CD4-positive, alpha-beta memory T cell (primary cell): ENCODE measurements at regions of chr13 and their contacts with region 1.

Region 1: GRCh38 chr13:76991796-76992547 is at the start of gene CLN5:
- DNase-seq: peak; percentile 95 to 98 (median 97)
- H3K4me3 ChIP-seq: peak within 1 kb of the TSS; percentile 88 to 93
- H3K4me3 Mint-ChIP-seq: peak within 1 kb of the TSS; percentile 92 to 99 (median 96)
- H3K27ac ChIP-seq: peak within 1 kb of the TSS; percentile 95
- H3K27ac Mint-ChIP-seq: peak within 1 kb of the TSS; percentile 98 to 100 (median 100)
- H3K4me1 ChIP-seq: peaks cover 37% of the 10 kb centered on the region
- H3K4me1 Mint-ChIP-seq: peaks cover 26 to 52% (median 41%) of the 10 kb centered on the region in 4 donors
- H3K27me3 ChIP-seq: no peaks in the 10 kb centered on the region
- H3K27me3 Mint-ChIP-seq: peaks cover 3 to 7% of the 10 kb centered on the region in 2 donors
- total RNA-seq, gene CLN5: 41.5 to 48.6 TPM

Region 2: GRCh38 chr13:75549262-75550158 is 1442.5 kb before region 1 on chr13 and contains the start of gene UCHL3:
- CTCF ChIA-PET with region 1: no interaction called
- POLR2A ChIA-PET with region 1: interaction called, 3 read pairs
- intact Hi-C with region 1: loop called (anchors 5 kb)
- DNase-seq: peak; percentile 95 to 97 (median 97)
- H3K4me3 ChIP-seq: peak within 1 kb of the TSS; percentile 73 to 78
- H3K4me3 Mint-ChIP-seq: peak within 1 kb of the TSS; percentile 93 to 98 (median 97)
- H3K27ac ChIP-seq: peak within 1 kb of the TSS; percentile 83
- H3K27ac Mint-ChIP-seq: peak within 1 kb of the TSS; percentile 94 to 99 (median 99)
- H3K4me1 ChIP-seq: peaks cover 30% of the 10 kb centered on the region
- H3K4me1 Mint-ChIP-seq: peaks cover 26 to 46% (median 36%) of the 10 kb centered on the region in 4 donors
- H3K27me3 ChIP-seq: no peaks in the 10 kb centered on the region
- H3K27me3 Mint-ChIP-seq: no peaks in the 10 kb centered on the region
- total RNA-seq, gene UCHL3: 17.5 to 20.2 TPM

Region 3: GRCh38 chr13:75760131-75761021 is 1231.6 kb before region 1 on chr13:
- CTCF ChIA-PET with region 1: no interaction called
- POLR2A ChIA-PET with region 1: no interaction called
- intact Hi-C with region 1: loop called (anchors 5 kb)
- DNase-seq: peak in 4 of 5 donors; percentile 24 to 29 (median 26)
- H3K4me3 ChIP-seq: peak overlapping the region in 1 of 2 donors; percentile 20
- H3K4me3 Mint-ChIP-seq: peak overlapping the region; percentile 77 to 91 (median 84)
- H3K27ac ChIP-seq: no peak overlapping the region
- H3K27ac Mint-ChIP-seq: peak overlapping the region; percentile 62 to 87 (median 77)
- H3K4me1 ChIP-seq: peaks cover 64% of the 10 kb centered on the region
- H3K4me1 Mint-ChIP-seq: peaks cover 54 to 80% (median 66%) of the 10 kb centered on the region in 4 donors
- H3K27me3 ChIP-seq: no peaks in the 10 kb centered on the region
- H3K27me3 Mint-ChIP-seq: no peaks in the 10 kb centered on the region

Region 4: GRCh38 chr13:76245920-76246319 is 746.1 kb before region 1 on chr13:
- CTCF ChIA-PET with region 1: no interaction called
- POLR2A ChIA-PET with region 1: no interaction called
- intact Hi-C with region 1: no loop called
- DNase-seq: no peak
- H3K4me3 ChIP-seq: no peak overlapping the region
- H3K4me3 Mint-ChIP-seq: no peak overlapping the region
- H3K27ac ChIP-seq: no peak overlapping the region
- H3K27ac Mint-ChIP-seq: no peak overlapping the region
- H3K4me1 ChIP-seq: no peaks in the 10 kb centered on the region
- H3K4me1 Mint-ChIP-seq: no peaks in the 10 kb centered on the region
- H3K27me3 ChIP-seq: no peaks in the 10 kb centered on the region
- H3K27me3 Mint-ChIP-seq: no peaks in the 10 kb centered on the region

Region 5: DNA sequence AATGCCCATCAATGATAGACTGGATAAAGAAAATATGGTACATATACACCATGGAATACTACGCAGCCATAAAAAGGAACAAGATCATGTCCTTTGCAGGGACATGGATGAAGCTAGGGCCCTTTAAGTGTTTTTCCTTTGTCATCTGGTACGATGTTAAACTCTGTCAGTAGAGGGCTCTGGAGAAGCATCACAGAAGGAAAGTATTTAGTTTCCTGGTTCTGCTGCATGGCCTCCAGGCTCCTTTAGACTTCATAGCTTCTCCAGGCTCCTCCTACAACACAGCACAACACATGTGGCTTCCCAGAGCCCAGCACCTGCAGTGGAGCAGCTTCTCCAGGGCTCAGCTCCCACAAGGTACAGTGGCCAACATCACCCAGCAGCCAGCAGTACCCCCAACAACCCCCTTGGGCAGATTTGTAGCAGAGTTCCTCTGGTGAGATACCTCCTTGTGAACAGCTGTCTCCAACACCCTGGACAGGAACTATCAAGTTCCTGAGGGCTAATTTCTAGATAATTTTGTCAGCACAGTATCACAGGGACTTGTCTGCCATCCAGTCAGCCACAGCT is 169.2 kb before region 1 on chr13:
- CTCF ChIA-PET with region 1: no interaction called
- POLR2A ChIA-PET with region 1: no interaction called
- intact Hi-C with region 1: no loop called
- DNase-seq: peak in 3 of 5 donors; percentile 3 to 29 (median 15)
- H3K4me3 ChIP-seq: no peak overlapping the region
- H3K4me3 Mint-ChIP-seq: no peak overlapping the region
- H3K27ac ChIP-seq: no peak overlapping the region
- H3K27ac Mint-ChIP-seq: no peak overlapping the region
- H3K4me1 ChIP-seq: no peaks in the 10 kb centered on the region
- H3K4me1 Mint-ChIP-seq: no peaks in the 10 kb centered on the region
- H3K27me3 ChIP-seq: no peaks in the 10 kb centered on the region
- H3K27me3 Mint-ChIP-seq: peaks cover 4 to 9% of the 10 kb centered on the region in 2 donors

Region 6: GRCh38 chr13:76980075-76980718 is 11.8 kb before region 1 on chr13:
- CTCF ChIA-PET with region 1: interaction called, 81 read pairs
- POLR2A ChIA-PET with region 1: interaction called, 29 read pairs
- intact Hi-C with region 1: loop called (anchors 1 kb)
- DNase-seq: peak; percentile 72 to 83 (median 78)
- H3K4me3 ChIP-seq: no peak overlapping the region
- H3K4me3 Mint-ChIP-seq: peak overlapping the region in 6 of 8 donors; percentile 35 to 69 (median 54)
- H3K27ac ChIP-seq: no peak overlapping the region
- H3K27ac Mint-ChIP-seq: peak overlapping the region in 2 of 7 donors; percentile 29 to 48
- H3K4me1 ChIP-seq: peaks cover 20% of the 10 kb centered on the region
- H3K4me1 Mint-ChIP-seq: peaks cover 7 to 15% (median 10%) of the 10 kb centered on the region in 4 donors
- H3K27me3 ChIP-seq: no peaks in the 10 kb centered on the region
- H3K27me3 Mint-ChIP-seq: peaks cover 18% of the 10 kb centered on the region in 2 donors

Region 7: DNA sequence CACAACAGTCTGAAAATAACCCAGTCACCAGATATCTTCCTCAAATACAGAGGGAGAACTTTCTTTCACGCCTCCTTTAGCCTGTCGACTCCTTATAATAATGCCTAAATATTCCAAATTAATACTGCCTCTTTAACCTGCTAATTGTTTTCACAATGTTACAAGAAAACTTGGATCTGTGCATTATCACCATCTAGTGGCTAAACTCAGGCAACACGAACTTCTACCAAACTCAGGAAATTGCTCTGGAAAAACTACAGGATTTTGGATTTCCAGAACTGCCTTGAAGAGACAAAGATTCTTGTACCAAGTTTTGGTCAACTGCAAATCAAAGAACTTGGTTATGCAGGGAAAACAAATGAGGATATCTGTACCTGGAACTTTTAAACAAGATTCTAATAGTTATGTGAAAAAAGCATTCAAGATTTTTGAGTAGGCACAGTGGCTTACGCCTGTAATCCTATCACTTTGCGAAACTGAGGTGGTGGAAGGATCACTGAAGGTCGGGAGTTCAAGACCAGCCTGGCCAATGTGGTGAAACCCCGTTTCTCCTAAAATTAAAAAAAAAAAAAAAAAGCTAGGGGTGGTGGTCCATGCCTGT is 10.7 kb after region 1 on chr13:
- CTCF ChIA-PET with region 1: interaction called, 23 read pairs
- POLR2A ChIA-PET with region 1: interaction called, 30 read pairs
- intact Hi-C with region 1: loop called (anchors 1 kb)
- DNase-seq: peak in 1 of 5 donors; percentile 19
- H3K4me3 ChIP-seq: no peak overlapping the region
- H3K4me3 Mint-ChIP-seq: no peak overlapping the region
- H3K27ac ChIP-seq: no peak overlapping the region
- H3K27ac Mint-ChIP-seq: peak overlapping the region; percentile 5 to 85 (median 30)
- H3K4me1 ChIP-seq: peaks cover 43% of the 10 kb centered on the region
- H3K4me1 Mint-ChIP-seq: peaks cover 25 to 44% (median 35%) of the 10 kb centered on the region in 4 donors
- H3K27me3 ChIP-seq: no peaks in the 10 kb centered on the region
- H3K27me3 Mint-ChIP-seq: no peaks in the 10 kb centered on the region

Region 8: DNA sequence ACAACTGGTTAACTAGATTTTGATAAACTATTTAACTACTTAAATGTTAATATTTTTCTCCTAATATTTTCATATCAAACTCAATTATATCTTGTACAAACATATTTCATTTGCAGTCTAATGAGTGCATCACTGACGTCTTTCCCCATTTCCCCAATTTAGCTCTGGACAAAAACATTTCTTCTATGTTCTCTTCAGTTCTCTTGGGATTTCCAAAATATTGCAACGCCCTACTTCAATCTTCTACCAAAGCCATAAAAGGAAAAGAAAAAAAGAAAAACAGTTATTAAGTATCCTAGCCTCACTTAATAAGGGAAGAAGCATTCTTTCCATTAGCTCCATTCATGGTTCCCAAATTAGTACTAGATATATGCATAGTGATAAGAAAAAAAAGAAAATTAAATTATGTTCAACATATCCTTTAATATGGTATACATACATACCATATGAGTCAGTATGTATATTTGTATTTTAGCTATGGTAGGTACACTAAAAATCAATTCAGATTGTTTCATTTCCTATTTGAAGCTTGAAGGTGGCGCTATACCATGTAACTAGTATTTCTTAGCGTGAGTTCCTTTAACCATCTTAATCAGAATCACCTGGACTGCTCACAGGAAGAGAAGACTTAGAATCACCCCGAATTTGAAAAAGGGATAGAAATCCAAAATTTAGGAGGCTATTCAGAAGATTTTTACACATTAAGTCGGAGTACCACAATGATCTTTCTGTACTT is 25.1 kb after region 1 on chr13:
- CTCF ChIA-PET with region 1: interaction called, 4 read pairs
- POLR2A ChIA-PET with region 1: interaction called, 20 read pairs
- intact Hi-C with region 1: no loop called
- DNase-seq: no peak
- H3K4me3 ChIP-seq: no peak overlapping the region
- H3K4me3 Mint-ChIP-seq: peak overlapping the region in 2 of 8 donors; percentile 5 to 23
- H3K27ac ChIP-seq: no peak overlapping the region
- H3K27ac Mint-ChIP-seq: peak overlapping the region in 5 of 7 donors; percentile 4 to 82 (median 65)
- H3K4me1 ChIP-seq: peaks cover 65% of the 10 kb centered on the region
- H3K4me1 Mint-ChIP-seq: peaks cover 44 to 75% (median 60%) of the 10 kb centered on the region in 4 donors
- H3K27me3 ChIP-seq: no peaks in the 10 kb centered on the region
- H3K27me3 Mint-ChIP-seq: no peaks in the 10 kb centered on the region

Region 9: DNA sequence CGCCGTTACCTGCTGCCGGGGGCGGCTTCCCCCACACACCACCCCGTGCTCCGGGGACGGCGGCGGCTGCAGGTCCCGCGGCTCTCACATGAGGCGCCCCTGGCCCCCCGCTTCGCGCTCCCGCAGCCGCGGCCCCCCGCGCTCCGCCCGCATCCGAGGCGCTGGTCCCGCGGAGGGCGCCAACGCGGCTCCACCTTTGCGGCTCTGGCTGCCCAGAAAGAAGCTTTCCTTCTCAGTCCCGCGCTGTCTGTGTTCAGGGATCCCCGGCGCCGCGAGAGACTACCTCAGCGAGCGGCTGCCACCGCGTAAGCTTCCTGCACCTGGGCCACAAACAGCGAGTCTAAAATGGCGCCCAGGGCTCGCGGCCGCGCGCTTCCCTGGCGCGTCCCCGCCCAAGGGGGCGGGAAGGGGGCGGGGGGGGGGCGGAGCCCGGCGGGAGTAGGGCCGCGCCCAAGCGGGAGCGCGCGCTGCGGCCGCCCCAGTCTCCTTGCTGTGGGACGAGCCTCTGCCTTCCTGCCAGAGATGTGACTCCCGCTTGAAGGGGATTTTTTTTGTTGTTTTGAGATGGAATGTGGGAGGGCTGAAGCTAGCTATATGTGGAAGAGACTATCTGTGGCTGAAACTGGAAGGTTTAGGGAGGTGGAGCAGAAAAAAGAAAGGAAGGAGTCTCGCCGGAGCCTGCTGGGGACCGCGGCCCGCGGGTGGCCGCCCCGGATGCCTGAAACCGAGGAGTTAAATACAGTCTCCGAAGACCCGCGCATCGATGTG is 35.0 kb after region 1 on chr13 and contains the start of gene FBXL3:
- CTCF ChIA-PET with region 1: interaction called, 23 read pairs
- POLR2A ChIA-PET with region 1: interaction called, 204 read pairs
- intact Hi-C with region 1: loop called (anchors 1 kb)
- DNase-seq: peak; percentile 83 to 87 (median 87)
- H3K4me3 ChIP-seq: peak within 1 kb of the TSS; percentile 66 to 86
- H3K4me3 Mint-ChIP-seq: peak within 1 kb of the TSS; percentile 96 to 100 (median 99)
- H3K27ac ChIP-seq: peak within 1 kb of the TSS; percentile 94
- H3K27ac Mint-ChIP-seq: peak within 1 kb of the TSS; percentile 80 to 99 (median 97)
- H3K4me1 ChIP-seq: peaks cover 48% of the 10 kb centered on the region
- H3K4me1 Mint-ChIP-seq: peaks cover 29 to 62% (median 46%) of the 10 kb centered on the region in 4 donors
- H3K27me3 ChIP-seq: no peaks in the 10 kb centered on the region
- H3K27me3 Mint-ChIP-seq: no peaks in the 10 kb centered on the region
- total RNA-seq, gene FBXL3: 94.2 to 96.2 TPM

Region 10: GRCh38 chr13:77533875-77534788 is 542.2 kb after region 1 on chr13:
- CTCF ChIA-PET with region 1: no interaction called
- POLR2A ChIA-PET with region 1: no interaction called
- intact Hi-C with region 1: no loop called
- DNase-seq: no peak
- H3K4me3 ChIP-seq: no peak overlapping the region
- H3K4me3 Mint-ChIP-seq: no peak overlapping the region
- H3K27ac ChIP-seq: no peak overlapping the region
- H3K27ac Mint-ChIP-seq: no peak overlapping the region
- H3K4me1 ChIP-seq: no peaks in the 10 kb centered on the region
- H3K4me1 Mint-ChIP-seq: no peaks in the 10 kb centered on the region
- H3K27me3 ChIP-seq: no peaks in the 10 kb centered on the region
- H3K27me3 Mint-ChIP-seq: peaks cover 3 to 10% of the 10 kb centered on the region in 2 donors